ENCODE measurements at regions of chr9 and their contacts with region 1.

Region 1: GRCh38 chr9:80749487-80749886 is 939.9 kb downstream of the TLE1 start:
- DNase-seq: no peak
- H3K4me3 ChIP-seq: no peak overlapping the region
- H3K27ac ChIP-seq: no peak overlapping the region
- H3K4me1 ChIP-seq: no peaks in the 10 kb centered on the region
- H3K27me3 ChIP-seq: no peaks in the 10 kb centered on the region
- CTCF ChIP-seq: no peak
- POLR2A ChIP-seq: no peak

Region 2: GRCh38 chr9:80874276-80874675 is 124.8 kb after region 1 on chr9:
- intact Hi-C with region 1: loop called (anchors 5 kb)
- DNase-seq: no peak
- H3K4me3 ChIP-seq: no peak overlapping the region
- H3K27ac ChIP-seq: no peak overlapping the region
- H3K4me1 ChIP-seq: no peaks in the 10 kb centered on the region
- H3K27me3 ChIP-seq: no peaks in the 10 kb centered on the region
- CTCF ChIP-seq: no peak
- POLR2A ChIP-seq: no peak

Measured in breast epithelium (tissue), 4 donors.